Mucosa of descending colon (tissue), 3 donors: ENCODE measurements at regions of chr13 and their contacts with region 1.

Region 1: DNA sequence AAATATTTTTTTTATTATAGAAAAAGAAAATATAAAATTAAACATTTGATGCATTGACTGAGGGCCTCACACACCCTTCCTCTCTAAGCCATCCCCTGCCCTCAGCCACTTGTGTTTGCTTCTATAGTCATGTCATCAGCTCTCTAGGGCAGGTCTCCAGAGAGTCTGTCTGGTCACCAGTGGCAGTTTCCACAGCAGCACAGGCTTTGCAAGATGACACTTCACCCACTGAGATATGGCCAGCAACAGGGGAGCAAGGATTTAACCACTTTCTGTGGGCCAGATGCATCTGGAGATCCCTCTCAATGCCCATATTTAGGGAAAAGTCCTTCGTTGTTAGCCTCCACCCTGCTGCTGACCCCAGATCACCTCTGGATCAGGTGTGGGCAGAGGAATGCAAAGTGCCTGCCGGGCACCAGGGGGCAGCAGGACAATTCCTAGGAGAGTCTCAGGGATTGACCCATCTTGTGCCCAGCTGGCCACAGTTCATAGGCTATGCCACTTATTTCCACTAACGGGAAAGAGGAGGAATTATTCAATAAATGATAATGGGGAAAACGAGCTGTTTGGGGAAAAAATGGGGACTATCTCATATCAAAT is 4.8 kb downstream of the ABCC4 start:
- DNase-seq: peak in 2 of 3 donors; percentile 72 to 79
- ATAC-seq: peak; percentile 60
- H3K4me3 ChIP-seq: no peak overlapping the region
- H3K4me1 ChIP-seq: peaks cover 14% of the 10 kb centered on the region
- CTCF ChIP-seq: peak; percentile 57

Region 2: GRCh38 chr13:95378603-95379002 is 82.2 kb after region 1 on chr13:
- intact Hi-C with region 1: loop called (anchors 5 to 10 kb)
- DNase-seq: no peak
- ATAC-seq: no peak
- H3K4me3 ChIP-seq: no peak overlapping the region
- H3K4me1 ChIP-seq: peaks cover 6% of the 10 kb centered on the region
- CTCF ChIP-seq: no peak

Region 3: DNA sequence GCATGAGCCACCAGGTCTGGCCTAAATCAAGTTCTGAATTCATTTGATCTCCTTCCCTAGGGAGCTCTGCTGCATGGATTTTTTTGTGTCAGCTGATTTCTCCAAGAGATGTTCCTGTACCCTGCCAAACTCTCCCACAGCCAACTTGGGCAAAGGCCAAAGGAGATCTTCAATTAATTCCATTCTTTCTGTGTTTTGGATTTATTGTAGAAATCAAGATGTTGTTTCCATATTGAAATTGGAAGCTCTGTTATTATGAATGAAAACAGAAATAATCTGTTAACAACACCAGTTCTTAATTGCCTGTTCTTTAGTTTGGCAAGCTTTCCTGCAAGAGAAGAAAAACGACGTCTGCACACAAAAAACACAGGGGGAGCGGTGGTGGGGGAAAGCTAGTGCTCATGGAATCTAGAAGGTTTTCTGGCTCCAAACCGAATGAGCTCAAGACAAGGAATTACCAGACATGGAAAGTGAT is 91.3 kb after region 1 on chr13:
- intact Hi-C with region 1: loop called (anchors 5 to 10 kb)
- DNase-seq: no peak
- ATAC-seq: no peak
- H3K4me3 ChIP-seq: no peak overlapping the region
- H3K4me1 ChIP-seq: no peaks in the 10 kb centered on the region
- CTCF ChIP-seq: no peak